GM12878 (cell line): ENCODE measurements at regions of chr2 and their contacts with region 1.

Region 1: GRCh38 chr2:210195101-210195852 is 24.1 kb upstream of the KANSL1L start:
- DNase-seq: no peak
- ATAC-seq: peak; percentile 69
- H3K4me3 ChIP-seq: no peak overlapping the region
- H3K27ac ChIP-seq: no peak overlapping the region
- H3K4me1 ChIP-seq: no peaks in the 10 kb centered on the region
- H3K27me3 ChIP-seq: no peaks in the 10 kb centered on the region
- CTCF ChIP-seq: peak; percentile 52 to 77 (median 55)
- EP300 ChIP-seq: no peak
- POLR2A ChIP-seq: no peak
- RAD21 ChIP-seq: peak; percentile 89

Region 2: GRCh38 chr2:208399202-208399601 is 1796.1 kb before region 1 on chr2:
- CTCF ChIA-PET with region 1: no interaction called
- POLR2A ChIA-PET with region 1: no interaction called
- RAD21 ChIA-PET with region 1: no interaction called
- SMC1A ChIA-PET with region 1: no interaction called
- in situ Hi-C with region 1: loop called (anchors 25 kb)
- intact Hi-C with region 1: loop called (anchors 5 kb)
- DNase-seq: no peak
- ATAC-seq: no peak
- H3K4me3 ChIP-seq: no peak overlapping the region
- H3K27ac ChIP-seq: no peak overlapping the region
- H3K4me1 ChIP-seq: no peaks in the 10 kb centered on the region
- H3K27me3 ChIP-seq: no peaks in the 10 kb centered on the region
- CTCF ChIP-seq: no peak
- EP300 ChIP-seq: no peak
- POLR2A ChIP-seq: no peak
- RAD21 ChIP-seq: no peak

Region 3: GRCh38 chr2:209834767-209835166 is 360.5 kb before region 1 on chr2:
- CTCF ChIA-PET with region 1: no interaction called
- POLR2A ChIA-PET with region 1: no interaction called
- RAD21 ChIA-PET with region 1: no interaction called
- SMC1A ChIA-PET with region 1: no interaction called
- in situ Hi-C with region 1: no loop called
- intact Hi-C with region 1: no loop called
- DNase-seq: no peak
- ATAC-seq: no peak
- H3K4me3 ChIP-seq: no peak overlapping the region
- H3K27ac ChIP-seq: no peak overlapping the region
- H3K4me1 ChIP-seq: no peaks in the 10 kb centered on the region
- H3K27me3 ChIP-seq: no peaks in the 10 kb centered on the region
- CTCF ChIP-seq: no peak
- EP300 ChIP-seq: no peak
- POLR2A ChIP-seq: no peak
- RAD21 ChIP-seq: no peak

Region 4: GRCh38 chr2:209960676-209961630 is 234.3 kb before region 1 on chr2:
- CTCF ChIA-PET with region 1: interaction called, 8 read pairs
- POLR2A ChIA-PET with region 1: no interaction called
- RAD21 ChIA-PET with region 1: interaction called, 5 read pairs
- SMC1A ChIA-PET with region 1: interaction called, 13 read pairs
- in situ Hi-C with region 1: no loop called
- intact Hi-C with region 1: no loop called
- DNase-seq: no peak
- ATAC-seq: peak; percentile 96
- H3K4me3 ChIP-seq: no peak overlapping the region
- H3K27ac ChIP-seq: no peak overlapping the region
- H3K4me1 ChIP-seq: no peaks in the 10 kb centered on the region
- H3K27me3 ChIP-seq: no peaks in the 10 kb centered on the region
- CTCF ChIP-seq: peak; percentile 58 to 72 (median 72)
- EP300 ChIP-seq: no peak
- POLR2A ChIP-seq: no peak
- RAD21 ChIP-seq: peak; percentile 68

Region 5: DNA sequence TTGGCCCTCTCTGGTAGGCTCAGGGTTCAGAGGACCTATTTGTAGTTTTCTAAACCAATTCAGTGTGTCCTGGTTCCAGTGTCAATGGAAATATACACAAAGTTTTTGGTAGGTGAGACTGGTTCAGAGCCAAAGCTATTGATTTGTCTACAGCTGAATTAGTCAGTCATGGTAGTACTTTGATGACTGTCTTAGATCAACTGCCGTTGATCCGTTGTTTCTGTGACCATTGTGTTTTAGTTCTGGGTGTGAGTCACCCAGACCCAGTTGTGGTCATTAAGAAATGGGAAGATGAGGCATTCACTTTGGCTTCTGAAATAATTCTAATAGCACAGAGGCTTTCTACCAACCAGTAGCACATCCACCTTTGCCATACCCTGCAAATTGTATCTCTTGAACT is 208.9 kb before region 1 on chr2:
- CTCF ChIA-PET with region 1: interaction called, 42 read pairs
- POLR2A ChIA-PET with region 1: interaction called, 3 read pairs
- RAD21 ChIA-PET with region 1: interaction called, 7 read pairs
- SMC1A ChIA-PET with region 1: interaction called, 9 read pairs
- in situ Hi-C with region 1: no loop called
- intact Hi-C with region 1: no loop called
- DNase-seq: no peak
- ATAC-seq: no peak
- H3K4me3 ChIP-seq: no peak overlapping the region
- H3K27ac ChIP-seq: no peak overlapping the region
- H3K4me1 ChIP-seq: no peaks in the 10 kb centered on the region
- H3K27me3 ChIP-seq: no peaks in the 10 kb centered on the region; a peak in 2 of 4 replicates
- CTCF ChIP-seq: no peak
- EP300 ChIP-seq: no peak
- POLR2A ChIP-seq: no peak
- RAD21 ChIP-seq: no peak

Region 6: GRCh38 chr2:210072922-210073509 is 122.3 kb before region 1 on chr2:
- CTCF ChIA-PET with region 1: interaction called, 23 read pairs
- POLR2A ChIA-PET with region 1: interaction called, 3 read pairs
- RAD21 ChIA-PET with region 1: interaction called, 9 read pairs
- SMC1A ChIA-PET with region 1: interaction called, 19 read pairs
- in situ Hi-C with region 1: loop called (anchors 5 kb)
- intact Hi-C with region 1: loop called (anchors 1 kb)
- DNase-seq: no peak
- ATAC-seq: peak; percentile 86
- H3K4me3 ChIP-seq: no peak overlapping the region
- H3K27ac ChIP-seq: no peak overlapping the region
- H3K4me1 ChIP-seq: no peaks in the 10 kb centered on the region
- H3K27me3 ChIP-seq: no peaks in the 10 kb centered on the region
- CTCF ChIP-seq: peak; percentile 58 to 72 (median 59)
- EP300 ChIP-seq: no peak
- POLR2A ChIP-seq: no peak
- RAD21 ChIP-seq: peak; percentile 70

Region 7: GRCh38 chr2:210233487-210233886 is 38.2 kb after region 1 on chr2:
- CTCF ChIA-PET with region 1: no interaction called
- POLR2A ChIA-PET with region 1: no interaction called
- RAD21 ChIA-PET with region 1: no interaction called
- SMC1A ChIA-PET with region 1: no interaction called
- in situ Hi-C with region 1: no loop called
- intact Hi-C with region 1: no loop called
- DNase-seq: no peak
- ATAC-seq: no peak
- H3K4me3 ChIP-seq: no peak overlapping the region
- H3K27ac ChIP-seq: no peak overlapping the region
- H3K4me1 ChIP-seq: no peaks in the 10 kb centered on the region
- H3K27me3 ChIP-seq: 0 out of 4 replicates have a peak, but pooled peaks cover 0 to 1% of the 10 kb centered on the region in 2 experiments
- CTCF ChIP-seq: no peak
- EP300 ChIP-seq: no peak
- POLR2A ChIP-seq: no peak
- RAD21 ChIP-seq: no peak

Region 8: DNA sequence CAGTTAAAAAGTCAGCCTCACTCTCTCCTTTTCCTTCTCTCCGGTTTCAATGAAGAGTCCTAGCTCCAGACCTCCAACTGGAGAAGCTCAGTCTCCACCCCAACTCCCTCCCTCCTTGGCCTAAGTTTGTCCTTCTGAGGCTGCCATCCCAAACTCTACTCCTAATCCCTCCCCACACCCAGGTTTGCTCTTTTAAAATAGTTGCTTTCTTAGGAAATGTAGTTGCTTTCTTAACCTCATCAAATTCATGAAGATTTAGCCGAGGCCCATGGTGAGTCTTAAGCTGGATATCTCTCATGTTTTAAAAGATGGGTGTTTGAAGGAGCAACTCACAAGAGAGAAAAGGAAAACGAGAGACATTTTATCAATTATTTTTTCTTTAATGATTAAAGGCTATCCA is 282.2 kb after region 1 on chr2:
- CTCF ChIA-PET with region 1: no interaction called
- POLR2A ChIA-PET with region 1: no interaction called
- RAD21 ChIA-PET with region 1: no interaction called
- SMC1A ChIA-PET with region 1: no interaction called
- in situ Hi-C with region 1: no loop called
- intact Hi-C with region 1: no loop called
- DNase-seq: no peak
- ATAC-seq: peak; percentile 45
- H3K4me3 ChIP-seq: peak overlapping the region; percentile 40; the same call in 1 of the 2 replicates
- H3K27ac ChIP-seq: no peak overlapping the region
- H3K4me1 ChIP-seq: no peaks in the 10 kb centered on the region
- H3K27me3 ChIP-seq: no peaks in the 10 kb centered on the region
- CTCF ChIP-seq: no peak
- EP300 ChIP-seq: no peak
- POLR2A ChIP-seq: no peak
- RAD21 ChIP-seq: no peak